Dendritic cell treated with granulocyte-macrophage colony-stimulating factor and Interleukin-4, amounts not matched to agents 40 ng/mL and 50 ng/mL, for 4 days (primary cell): ENCODE measurements at regions of chr7 and their contacts with region 1.

Region 1: GRCh38 chr7:123797673-123798527 is 47.1 kb upstream of the HYAL4 start:
- H3K4me3 Mint-ChIP-seq: no peak overlapping the region
- H3K27ac Mint-ChIP-seq: no peak overlapping the region
- H3K4me1 Mint-ChIP-seq: no peaks in the 10 kb centered on the region
- H3K27me3 Mint-ChIP-seq: no peaks in the 10 kb centered on the region

Region 2: GRCh38 chr7:123355576-123356195 is 442.2 kb before region 1 on chr7:
- intact Hi-C with region 1: no loop called
- H3K4me3 Mint-ChIP-seq: no peak overlapping the region
- H3K27ac Mint-ChIP-seq: no peak overlapping the region
- H3K4me1 Mint-ChIP-seq: no peaks in the 10 kb centered on the region
- H3K27me3 Mint-ChIP-seq: no peaks in the 10 kb centered on the region

Region 3: GRCh38 chr7:123666492-123666891 is 131.4 kb before region 1 on chr7:
- intact Hi-C with region 1: no loop called
- H3K4me3 Mint-ChIP-seq: no peak overlapping the region
- H3K27ac Mint-ChIP-seq: no peak overlapping the region
- H3K4me1 Mint-ChIP-seq: peaks cover 5% of the 10 kb centered on the region
- H3K27me3 Mint-ChIP-seq: peaks cover 2% of the 10 kb centered on the region

Region 4: GRCh38 chr7:123865517-123866117 is 67.7 kb after region 1 on chr7:
- intact Hi-C with region 1: loop called (anchors 2 kb)
- H3K4me3 Mint-ChIP-seq: no peak overlapping the region
- H3K27ac Mint-ChIP-seq: peak overlapping the region; percentile 30
- H3K4me1 Mint-ChIP-seq: peaks cover 32% of the 10 kb centered on the region
- H3K27me3 Mint-ChIP-seq: peaks cover 3% of the 10 kb centered on the region

Region 5: DNA sequence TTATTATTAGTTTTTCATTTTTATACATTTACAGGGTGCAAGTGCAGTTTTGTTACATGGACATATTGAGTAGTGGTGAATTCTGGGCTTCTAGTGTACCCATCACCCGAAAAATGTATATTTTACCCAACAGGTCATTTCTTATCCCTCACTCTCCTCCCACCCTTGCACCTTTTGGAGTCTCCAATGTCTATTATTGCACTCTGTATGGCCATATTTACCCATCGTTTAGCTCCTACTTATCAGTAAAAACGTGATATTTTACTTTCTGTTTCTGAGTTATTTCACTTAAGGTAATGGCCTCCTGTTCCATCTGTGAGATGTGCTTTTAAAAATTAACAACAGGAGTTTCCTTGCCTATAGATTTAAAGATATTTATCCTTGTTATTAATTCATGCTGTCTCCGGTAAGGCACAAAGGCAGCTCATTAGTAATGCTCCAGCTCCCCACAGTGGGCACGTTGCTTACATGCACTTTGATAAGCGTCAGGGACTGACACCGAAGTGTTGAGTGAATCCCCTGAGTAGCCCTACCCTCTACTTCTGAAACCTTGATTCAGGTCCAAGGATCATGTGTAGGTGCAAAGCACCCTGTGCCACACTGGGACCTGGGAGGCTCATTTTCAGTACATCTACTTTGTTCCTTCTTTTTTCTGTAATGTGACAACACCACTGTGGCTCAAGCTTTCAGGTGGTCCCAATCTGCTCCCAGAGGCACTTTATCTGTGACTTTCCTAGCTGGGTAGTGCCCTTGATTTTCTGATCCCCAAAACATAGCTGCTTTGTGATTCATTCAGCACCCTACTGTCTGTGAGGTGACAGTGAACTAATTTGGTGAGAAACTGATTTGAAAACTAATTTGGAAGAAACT is 74.3 kb after region 1 on chr7:
- intact Hi-C with region 1: loop called (anchors 2 kb)
- H3K4me3 Mint-ChIP-seq: no peak overlapping the region
- H3K27ac Mint-ChIP-seq: no peak overlapping the region
- H3K4me1 Mint-ChIP-seq: peaks cover 2% of the 10 kb centered on the region
- H3K27me3 Mint-ChIP-seq: peaks cover 10% of the 10 kb centered on the region

Region 6: GRCh38 chr7:123916240-123916724 is 118.4 kb after region 1 on chr7:
- intact Hi-C with region 1: loop called (anchors 5 kb)
- H3K4me3 Mint-ChIP-seq: no peak overlapping the region
- H3K27ac Mint-ChIP-seq: no peak overlapping the region
- H3K4me1 Mint-ChIP-seq: peaks cover 5% of the 10 kb centered on the region
- H3K27me3 Mint-ChIP-seq: no peaks in the 10 kb centered on the region

Region 7: GRCh38 chr7:124042816-124043215 is 244.9 kb after region 1 on chr7:
- intact Hi-C with region 1: no loop called
- H3K4me3 Mint-ChIP-seq: no peak overlapping the region
- H3K27ac Mint-ChIP-seq: no peak overlapping the region
- H3K4me1 Mint-ChIP-seq: no peaks in the 10 kb centered on the region
- H3K27me3 Mint-ChIP-seq: no peaks in the 10 kb centered on the region

Region 8: DNA sequence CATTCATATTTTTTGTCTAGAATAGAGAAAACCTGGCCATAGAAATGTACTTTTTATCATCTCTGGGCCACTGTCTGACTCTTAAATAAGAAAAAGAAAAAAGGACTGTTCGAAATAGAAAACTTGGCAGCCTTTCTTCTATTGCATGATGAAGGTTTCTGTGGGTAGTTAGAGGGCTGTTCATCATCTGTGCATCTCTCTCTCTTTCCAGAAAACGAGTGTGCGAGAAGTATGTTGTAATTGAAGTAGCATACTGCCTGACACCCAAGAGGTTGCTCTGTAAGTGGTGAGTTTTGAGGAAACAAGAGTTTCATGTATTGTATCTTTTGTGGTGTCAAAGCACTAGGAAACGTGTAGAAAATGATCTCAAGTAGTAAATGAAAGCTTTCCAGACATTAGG is 578.2 kb after region 1 on chr7:
- intact Hi-C with region 1: no loop called
- H3K4me3 Mint-ChIP-seq: no peak overlapping the region
- H3K27ac Mint-ChIP-seq: no peak overlapping the region
- H3K4me1 Mint-ChIP-seq: no peaks in the 10 kb centered on the region
- H3K27me3 Mint-ChIP-seq: no peaks in the 10 kb centered on the region

Region 9: DNA sequence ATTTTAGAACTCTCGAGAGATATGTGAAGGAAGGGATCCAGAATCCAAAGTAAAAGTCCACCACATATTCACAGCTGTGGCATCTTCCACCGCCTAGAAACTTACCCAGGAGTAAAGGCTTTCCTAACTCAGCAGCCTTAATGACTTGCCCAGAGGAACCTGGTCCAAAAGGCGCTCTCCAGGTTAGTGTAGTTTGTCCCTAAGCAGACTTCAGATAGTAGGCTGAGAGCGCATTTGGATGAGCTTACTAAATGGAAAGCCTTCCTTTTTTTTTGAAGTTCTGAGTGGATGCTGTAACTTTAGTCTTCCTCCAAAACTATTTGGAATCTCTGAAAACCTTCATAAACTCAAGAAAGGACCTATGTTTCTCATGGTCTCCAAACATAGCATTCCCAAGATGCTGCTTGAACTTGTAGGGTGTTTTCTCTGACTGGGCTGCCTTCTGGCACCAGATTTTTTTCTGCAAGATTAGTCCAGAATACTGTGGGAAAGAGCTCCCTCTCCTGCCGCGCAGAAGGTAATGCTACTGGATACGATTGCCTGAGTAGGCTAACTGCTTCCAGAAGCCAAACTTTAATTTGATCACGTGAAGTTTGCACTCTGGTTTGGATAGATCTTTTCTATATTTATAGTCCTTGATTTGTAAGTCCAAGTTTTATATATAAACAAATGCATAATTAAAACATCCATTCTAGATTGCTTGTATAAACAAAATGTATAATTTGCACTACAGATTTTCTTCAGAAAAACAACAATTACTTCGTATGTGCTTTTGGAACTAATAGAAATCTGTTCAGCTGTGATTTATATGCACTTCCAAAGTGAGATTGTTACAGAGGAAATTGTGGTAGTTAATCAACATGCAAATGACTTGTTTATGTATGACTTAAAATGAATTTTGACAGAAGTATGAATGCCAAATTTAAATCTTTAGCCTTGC is 987.2 kb after region 1 on chr7:
- intact Hi-C with region 1: loop called (anchors 10 kb)
- H3K4me3 Mint-ChIP-seq: no peak overlapping the region
- H3K27ac Mint-ChIP-seq: no peak overlapping the region
- H3K4me1 Mint-ChIP-seq: no peaks in the 10 kb centered on the region
- H3K27me3 Mint-ChIP-seq: no peaks in the 10 kb centered on the region